ENCODE measurements at regions of chr19 and their contacts with region 1.

Region 1: DNA sequence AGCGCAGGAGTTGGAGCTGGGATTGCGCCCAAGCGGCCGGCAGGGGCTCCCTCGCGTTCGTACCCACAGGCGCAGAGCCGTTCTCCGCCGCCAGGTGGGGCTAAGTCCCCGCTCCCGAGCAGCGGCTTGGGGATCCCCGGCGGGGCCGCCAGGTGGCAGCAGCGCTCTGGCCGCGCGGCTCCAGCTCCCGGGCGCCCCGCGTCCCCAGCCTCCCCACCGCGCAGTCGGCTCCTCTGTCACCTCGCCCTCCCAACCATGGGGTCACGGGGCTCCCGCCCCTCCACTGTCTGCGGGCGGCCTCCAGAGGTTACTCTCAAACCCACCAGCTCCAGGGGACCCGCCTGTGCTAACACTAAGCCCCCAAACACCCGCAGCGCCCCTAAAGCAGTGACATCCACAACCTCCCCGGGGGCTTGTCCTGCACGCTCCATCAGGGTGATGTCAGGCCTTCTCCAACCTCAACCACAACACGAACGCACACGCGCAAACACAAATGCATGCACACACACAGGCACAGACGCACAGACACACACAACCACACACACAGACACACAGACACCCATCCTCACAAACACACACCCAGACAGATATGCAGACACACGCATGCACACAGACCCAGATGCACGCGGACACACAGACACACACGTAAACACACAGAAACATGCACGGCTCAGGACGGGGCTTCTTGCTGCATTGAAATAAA is 18.4 kb upstream of the KCTD15 start:
- DNase-seq: peak; percentile 86
- ATAC-seq: peak; percentile 97
- H3K4me3 Mint-ChIP-seq: no peak overlapping the region
- H3K27ac Mint-ChIP-seq: no peak overlapping the region
- H3K4me1 Mint-ChIP-seq: peaks cover 3% of the 10 kb centered on the region
- H3K27me3 Mint-ChIP-seq: peaks cover 29% of the 10 kb centered on the region
- CTCF ChIP-seq: peak; percentile 100

Region 2: GRCh38 chr19:33717878-33718277 is 60.4 kb before region 1 on chr19:
- CTCF ChIA-PET with region 1: no interaction called
- POLR2A ChIA-PET with region 1: no interaction called
- intact Hi-C with region 1: no loop called
- DNase-seq: no peak
- ATAC-seq: no peak
- H3K4me3 Mint-ChIP-seq: no peak overlapping the region
- H3K27ac Mint-ChIP-seq: no peak overlapping the region
- H3K4me1 Mint-ChIP-seq: no peaks in the 10 kb centered on the region
- H3K27me3 Mint-ChIP-seq: peaks cover 6% of the 10 kb centered on the region
- CTCF ChIP-seq: no peak

Region 3: GRCh38 chr19:33740811-33741396 is 37.3 kb before region 1 on chr19:
- CTCF ChIA-PET with region 1: no interaction called
- POLR2A ChIA-PET with region 1: no interaction called
- intact Hi-C with region 1: no loop called
- DNase-seq: peak; percentile 17
- ATAC-seq: no peak
- H3K4me3 Mint-ChIP-seq: no peak overlapping the region
- H3K27ac Mint-ChIP-seq: no peak overlapping the region
- H3K4me1 Mint-ChIP-seq: no peaks in the 10 kb centered on the region
- H3K27me3 Mint-ChIP-seq: no peaks in the 10 kb centered on the region
- CTCF ChIP-seq: no peak

Region 4: DNA sequence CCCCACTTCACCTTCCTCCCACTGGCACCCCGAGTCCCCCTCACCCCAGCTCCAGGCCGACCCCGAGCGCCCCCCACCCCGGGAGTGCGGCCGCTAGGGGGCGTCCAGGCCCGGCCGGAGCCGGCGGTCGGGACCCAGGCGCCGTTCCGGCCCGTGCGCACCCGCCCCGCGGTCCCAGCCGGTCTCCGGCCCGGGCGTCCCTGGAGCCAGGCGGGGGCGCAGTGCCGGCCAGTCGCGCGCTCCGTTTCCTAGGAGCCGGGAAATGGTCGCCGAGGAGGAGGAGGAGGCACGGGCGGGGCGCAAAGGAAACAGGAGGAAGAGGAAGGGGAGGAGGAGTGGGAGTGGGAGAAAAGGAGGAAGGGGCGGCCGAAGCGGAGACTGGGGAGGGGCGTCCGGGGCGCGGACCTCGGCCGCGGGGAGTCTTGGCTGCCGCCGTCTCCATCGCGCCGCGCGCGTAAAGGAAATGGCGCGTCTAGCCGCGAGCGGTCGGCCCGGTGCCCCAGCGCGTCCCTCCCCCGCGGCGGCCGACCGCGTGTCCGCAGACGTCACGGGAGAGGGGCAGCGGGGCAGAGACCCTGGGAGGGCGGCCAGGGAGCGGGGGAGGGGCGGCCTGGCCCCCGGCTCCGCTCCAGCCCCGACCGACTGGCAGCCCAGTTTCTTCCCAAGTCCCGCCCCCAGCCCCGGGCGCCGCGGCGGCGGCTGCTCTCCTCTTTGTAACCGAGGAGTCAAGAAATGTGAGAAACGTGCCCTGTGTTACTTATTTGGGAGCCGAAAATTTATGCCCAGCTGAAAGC is 17.3 kb after region 1 on chr19:
- CTCF ChIA-PET with region 1: interaction called, 25 read pairs
- POLR2A ChIA-PET with region 1: no interaction called
- intact Hi-C with region 1: no loop called
- DNase-seq: peak; percentile 36
- ATAC-seq: peak; percentile 57
- H3K4me3 Mint-ChIP-seq: peak overlapping the region; percentile 71
- H3K27ac Mint-ChIP-seq: peak overlapping the region; percentile 61
- H3K4me1 Mint-ChIP-seq: no peaks in the 10 kb centered on the region
- H3K27me3 Mint-ChIP-seq: peaks cover 39% of the 10 kb centered on the region
- CTCF ChIP-seq: peak; percentile 94

Region 5: GRCh38 chr19:33998739-33999345 is 220.6 kb after region 1 on chr19:
- CTCF ChIA-PET with region 1: interaction called, 33 read pairs
- POLR2A ChIA-PET with region 1: no interaction called
- intact Hi-C with region 1: loop called (anchors 5 kb)
- DNase-seq: no peak
- ATAC-seq: no peak
- H3K4me3 Mint-ChIP-seq: no peak overlapping the region
- H3K27ac Mint-ChIP-seq: no peak overlapping the region
- H3K4me1 Mint-ChIP-seq: no peaks in the 10 kb centered on the region
- H3K27me3 Mint-ChIP-seq: peaks cover 15% of the 10 kb centered on the region
- CTCF ChIP-seq: peak; percentile 34

Region 6: DNA sequence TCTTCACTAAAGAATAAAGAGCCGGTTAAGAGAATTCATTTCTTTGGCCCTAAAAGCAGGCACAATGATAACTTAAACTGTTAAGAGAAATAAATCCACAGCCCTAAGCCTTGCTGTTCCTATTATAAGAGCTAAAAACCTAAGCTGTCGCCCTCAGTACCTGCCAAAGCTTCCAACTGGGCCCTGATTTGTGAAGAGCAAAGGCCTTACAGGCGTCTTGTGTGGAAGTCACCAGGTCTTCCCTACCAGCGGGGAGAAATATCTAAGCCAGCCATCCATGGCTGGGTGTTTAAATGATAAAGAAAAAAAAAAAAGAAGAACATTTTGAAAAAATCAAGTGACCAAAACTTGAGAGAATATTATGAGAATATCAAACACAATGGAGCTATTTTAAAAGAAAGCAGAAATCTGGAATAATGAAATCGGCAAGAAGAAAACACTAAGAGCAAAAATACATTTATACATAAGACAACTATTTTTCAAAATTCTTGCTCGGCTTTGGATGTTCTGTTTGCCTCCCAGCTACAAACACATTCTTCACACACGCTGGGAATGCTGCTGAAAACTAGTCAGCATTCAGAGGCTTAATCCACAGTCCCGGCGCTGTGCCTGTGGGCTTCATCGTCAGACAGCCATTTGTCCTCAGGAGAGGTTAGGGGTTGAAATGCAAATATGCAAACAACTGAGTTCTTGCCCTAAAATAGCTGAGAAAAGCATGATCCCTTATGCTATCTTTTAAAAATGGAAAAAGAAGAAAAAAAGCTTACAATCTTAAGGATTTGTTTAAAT is 304.2 kb after region 1 on chr19:
- CTCF ChIA-PET with region 1: interaction called, 15 read pairs
- POLR2A ChIA-PET with region 1: no interaction called
- intact Hi-C with region 1: no loop called
- DNase-seq: no peak
- ATAC-seq: no peak
- H3K4me3 Mint-ChIP-seq: no peak overlapping the region
- H3K27ac Mint-ChIP-seq: no peak overlapping the region
- H3K4me1 Mint-ChIP-seq: no peaks in the 10 kb centered on the region
- H3K27me3 Mint-ChIP-seq: peaks cover 12% of the 10 kb centered on the region
- CTCF ChIP-seq: no peak

Region 7: DNA sequence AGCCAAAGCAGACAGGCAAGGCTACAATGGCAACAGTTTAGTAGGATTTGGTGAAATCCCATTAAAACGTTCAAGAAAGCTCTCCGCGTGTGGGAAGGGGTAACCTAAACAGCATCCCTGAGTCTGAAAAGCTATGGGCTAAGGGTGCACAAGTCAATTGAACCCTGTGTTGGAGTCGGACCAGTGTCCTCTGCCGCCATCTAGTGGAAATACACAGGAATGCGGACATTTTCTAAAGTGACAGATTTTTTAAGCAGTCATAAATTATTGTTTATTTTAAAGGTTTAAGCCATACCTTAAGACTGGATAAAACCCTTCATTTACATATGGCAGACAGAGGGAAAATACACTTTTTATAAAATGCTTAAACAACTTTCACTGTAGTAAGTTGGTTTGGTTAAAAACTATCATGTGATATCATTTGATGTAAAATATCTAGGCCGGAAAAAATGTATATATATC is 367.5 kb after region 1 on chr19:
- CTCF ChIA-PET with region 1: interaction called, 19 read pairs
- POLR2A ChIA-PET with region 1: no interaction called
- intact Hi-C with region 1: loop called (anchors 10 kb)
- DNase-seq: peak; percentile 72
- ATAC-seq: peak; percentile 74
- H3K4me3 Mint-ChIP-seq: no peak overlapping the region
- H3K27ac Mint-ChIP-seq: no peak overlapping the region
- H3K4me1 Mint-ChIP-seq: no peaks in the 10 kb centered on the region
- H3K27me3 Mint-ChIP-seq: no peaks in the 10 kb centered on the region
- CTCF ChIP-seq: peak; percentile 80

Measured in activated CD8-positive, alpha-beta T cell treated with anti-CD3 and anti-CD28 coated beads for 36 hours (primary cell).